ENCODE measurements at regions of chr18 and their contacts with region 1.

Region 1: DNA sequence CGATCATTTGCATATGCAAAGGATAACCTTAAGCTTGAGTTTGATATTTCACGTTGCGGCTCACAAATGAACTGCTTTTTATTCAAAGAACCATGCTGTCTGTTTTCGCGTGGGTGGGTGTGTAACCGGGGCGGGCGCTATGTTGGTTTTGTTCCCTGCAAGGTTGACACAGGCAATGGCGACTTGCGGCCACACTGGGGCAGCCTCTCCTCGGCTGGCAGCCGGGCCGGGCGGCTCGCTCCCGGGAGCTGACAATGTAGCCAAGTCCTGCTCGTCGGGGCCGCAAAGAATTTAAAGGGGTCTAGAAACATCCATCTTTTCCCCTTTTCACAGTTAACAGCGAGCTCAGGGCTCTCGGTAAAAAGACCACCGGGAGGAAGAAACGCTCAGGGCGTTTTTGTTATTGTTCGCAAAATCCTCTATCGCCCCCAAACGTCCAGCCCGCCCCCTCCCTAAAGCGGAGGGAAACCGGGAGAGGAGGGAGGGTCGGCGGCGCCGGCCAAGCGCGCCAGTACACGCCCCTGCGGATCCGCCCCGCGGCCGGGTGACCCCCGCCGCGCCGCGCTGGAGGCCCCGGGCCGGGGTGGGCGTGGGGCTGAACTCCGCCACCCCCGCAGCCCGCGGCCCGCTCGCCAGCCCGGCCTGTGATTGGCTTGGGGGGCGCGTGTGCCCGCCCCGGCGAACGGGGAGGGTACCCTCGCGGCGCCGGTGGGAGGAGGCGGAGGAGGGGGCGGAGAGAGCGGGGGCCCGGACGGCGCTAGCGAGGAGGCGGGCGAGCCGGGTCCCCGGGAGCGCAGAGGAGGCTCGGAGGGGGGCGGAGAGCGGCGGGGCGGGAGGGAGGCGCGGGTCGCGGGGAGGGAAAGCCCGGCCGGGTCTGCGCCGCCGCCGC is at the start of gene NEDD4L:
- DNase-seq: peak; percentile 93
- H3K4me3 Mint-ChIP-seq: peak within 1 kb of the TSS; percentile 99
- H3K27ac Mint-ChIP-seq: peak within 1 kb of the TSS; percentile 93
- H3K4me1 Mint-ChIP-seq: peaks cover 50% of the 10 kb centered on the region
- H3K27me3 Mint-ChIP-seq: no peaks in the 10 kb centered on the region
- CTCF ChIP-seq: peak; percentile 79
- total RNA-seq, gene NEDD4L: 213 TPM in 2 replicates

Region 2: DNA sequence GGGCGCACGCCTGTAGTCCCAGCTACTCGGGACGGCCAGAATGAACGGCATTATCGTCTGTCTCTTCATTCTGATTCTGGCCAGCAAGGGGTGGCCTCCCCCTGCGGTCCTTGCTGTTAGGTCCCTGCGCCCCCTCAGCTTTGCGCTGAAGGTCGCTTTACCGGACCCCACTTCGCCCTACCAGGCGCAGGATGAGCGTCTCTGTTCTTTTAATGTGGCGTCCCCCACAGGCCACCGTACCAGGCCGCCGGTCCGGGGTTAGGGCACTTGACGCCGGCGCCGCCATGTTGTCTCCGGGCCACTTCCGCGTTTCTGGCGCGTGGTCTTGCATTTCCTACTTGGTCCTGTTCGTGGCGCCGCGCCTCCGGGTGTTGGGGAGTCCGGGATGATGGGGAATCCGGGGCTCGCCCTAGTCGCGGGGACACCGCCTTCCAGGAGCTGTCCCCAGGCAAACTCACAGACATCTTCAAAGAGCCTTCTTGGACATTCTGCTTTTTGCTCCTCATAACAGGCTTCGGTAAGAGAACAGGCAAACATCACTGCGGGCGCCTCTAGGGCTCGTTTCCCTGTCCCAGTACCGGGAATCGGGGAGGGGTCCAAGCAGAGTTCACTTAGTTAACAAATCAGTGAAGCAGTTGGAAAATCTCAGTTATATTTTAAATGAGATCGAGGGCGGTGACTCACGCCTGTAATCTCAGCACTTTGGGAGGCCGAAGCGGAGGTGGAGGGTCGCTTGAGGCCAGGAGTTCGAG is 413.6 kb before region 1 on chr18:
- CTCF ChIA-PET with region 1: interaction called, 3 read pairs
- intact Hi-C with region 1: loop called (anchors 10 kb)
- DNase-seq: peak; percentile 95
- H3K4me3 Mint-ChIP-seq: peak overlapping the region; percentile 80
- H3K27ac Mint-ChIP-seq: peak overlapping the region; percentile 73
- H3K4me1 Mint-ChIP-seq: peaks cover 38% of the 10 kb centered on the region
- H3K27me3 Mint-ChIP-seq: no peaks in the 10 kb centered on the region
- CTCF ChIP-seq: peak; percentile 79

Region 3: DNA sequence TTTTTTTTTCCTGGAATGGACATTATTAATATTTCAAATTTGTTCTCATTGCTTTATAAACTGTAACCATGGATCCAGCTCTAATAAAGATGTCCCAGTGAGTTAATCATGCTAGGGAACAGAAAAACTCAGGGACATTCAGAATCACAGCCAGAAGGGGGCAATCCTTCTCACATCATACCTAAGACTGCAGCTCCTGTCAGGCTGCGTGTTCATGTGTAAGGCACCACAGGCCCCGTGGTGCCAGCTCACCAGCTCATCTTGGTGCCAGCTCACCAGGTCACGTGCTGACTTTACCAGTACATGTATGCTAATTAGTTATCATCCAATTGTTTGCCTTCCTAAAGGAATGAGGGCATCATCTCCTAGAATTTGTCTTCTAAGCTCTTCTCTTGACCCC is 84.5 kb before region 1 on chr18:
- CTCF ChIA-PET with region 1: interaction called, 15 read pairs
- intact Hi-C with region 1: loop called (anchors 2 kb)
- DNase-seq: peak; percentile 72
- H3K4me3 Mint-ChIP-seq: no peak overlapping the region
- H3K27ac Mint-ChIP-seq: no peak overlapping the region
- H3K4me1 Mint-ChIP-seq: peaks cover 31% of the 10 kb centered on the region
- H3K27me3 Mint-ChIP-seq: no peaks in the 10 kb centered on the region
- CTCF ChIP-seq: no peak

Region 4: DNA sequence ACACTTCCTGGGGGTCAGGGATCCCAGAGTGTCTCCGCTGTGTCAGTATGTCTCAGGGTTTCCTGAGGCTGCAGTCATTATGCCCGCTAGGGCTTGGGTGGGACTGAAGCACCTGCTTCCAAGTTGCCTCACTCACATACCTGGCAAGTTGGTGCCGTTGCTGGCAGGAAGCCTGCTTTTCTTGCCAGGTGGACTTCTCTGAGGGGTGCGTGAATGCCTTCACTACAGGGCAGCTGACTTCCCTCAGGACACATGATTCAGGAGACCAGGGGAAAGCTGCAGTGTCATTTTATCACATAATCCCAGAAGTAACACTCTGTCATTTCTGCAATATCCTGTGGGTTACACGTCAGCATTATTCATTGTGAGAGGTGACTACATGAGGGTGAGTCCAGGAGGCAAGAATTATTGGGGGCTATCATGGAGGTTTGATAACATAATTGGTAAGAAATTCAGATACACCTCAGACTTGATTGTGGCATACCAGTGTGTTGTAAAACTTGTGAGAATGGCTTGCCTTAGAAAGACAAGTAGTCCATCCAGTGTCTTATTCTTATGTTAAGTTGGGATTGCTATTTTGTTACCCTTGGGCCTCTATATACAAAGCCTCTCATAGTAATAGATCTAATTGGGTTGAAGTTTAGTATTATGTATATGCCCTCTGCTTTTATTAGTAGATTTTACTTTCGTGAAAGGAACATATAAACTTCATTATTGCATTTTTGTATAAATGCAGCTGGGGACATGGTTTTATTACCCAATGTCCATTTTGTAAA is 44.4 kb after region 1 on chr18:
- CTCF ChIA-PET with region 1: interaction called, 4 read pairs
- intact Hi-C with region 1: loop called (anchors 5 kb)
- DNase-seq: peak; percentile 79
- H3K4me3 Mint-ChIP-seq: peak overlapping the region; percentile 54
- H3K27ac Mint-ChIP-seq: peak overlapping the region; percentile 56
- H3K4me1 Mint-ChIP-seq: peaks cover 72% of the 10 kb centered on the region
- H3K27me3 Mint-ChIP-seq: no peaks in the 10 kb centered on the region
- CTCF ChIP-seq: no peak

Region 5: DNA sequence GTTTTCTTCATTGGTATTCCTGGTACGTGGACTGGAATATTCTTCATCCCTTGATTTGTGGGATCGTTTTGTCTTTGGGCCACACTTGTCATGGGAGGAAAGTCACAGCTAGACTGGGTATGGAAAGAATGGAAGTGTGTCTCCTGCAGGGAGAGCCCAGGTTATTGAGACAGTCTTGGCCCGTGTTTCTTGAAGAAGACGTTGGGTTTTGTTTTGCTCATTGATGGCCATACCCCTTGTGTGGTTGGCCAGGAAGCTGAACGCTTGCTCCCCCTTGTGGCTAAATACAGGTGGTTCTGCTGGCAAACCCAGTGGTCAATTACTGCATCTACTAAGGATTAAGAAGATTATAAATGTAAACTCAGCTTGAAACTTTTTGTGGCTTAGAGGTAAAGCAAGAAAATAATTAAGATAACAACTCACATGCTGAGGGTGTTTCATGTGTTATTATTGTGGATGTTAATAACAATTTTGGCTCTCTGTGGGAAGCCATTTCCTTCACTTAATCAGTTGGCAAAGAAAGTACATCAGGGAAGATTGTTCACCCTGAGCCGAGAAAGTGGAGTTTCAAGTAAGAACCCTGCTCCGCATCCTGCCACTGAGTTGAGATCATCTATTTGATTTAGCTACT is 92.1 kb after region 1 on chr18:
- CTCF ChIA-PET with region 1: interaction called, 3 read pairs
- intact Hi-C with region 1: loop called (anchors 5 kb)
- DNase-seq: peak; percentile 80
- H3K4me3 Mint-ChIP-seq: peak overlapping the region; percentile 43
- H3K27ac Mint-ChIP-seq: peak overlapping the region; percentile 69
- H3K4me1 Mint-ChIP-seq: peaks cover 65% of the 10 kb centered on the region
- H3K27me3 Mint-ChIP-seq: no peaks in the 10 kb centered on the region
- CTCF ChIP-seq: peak; percentile 87

Region 6: DNA sequence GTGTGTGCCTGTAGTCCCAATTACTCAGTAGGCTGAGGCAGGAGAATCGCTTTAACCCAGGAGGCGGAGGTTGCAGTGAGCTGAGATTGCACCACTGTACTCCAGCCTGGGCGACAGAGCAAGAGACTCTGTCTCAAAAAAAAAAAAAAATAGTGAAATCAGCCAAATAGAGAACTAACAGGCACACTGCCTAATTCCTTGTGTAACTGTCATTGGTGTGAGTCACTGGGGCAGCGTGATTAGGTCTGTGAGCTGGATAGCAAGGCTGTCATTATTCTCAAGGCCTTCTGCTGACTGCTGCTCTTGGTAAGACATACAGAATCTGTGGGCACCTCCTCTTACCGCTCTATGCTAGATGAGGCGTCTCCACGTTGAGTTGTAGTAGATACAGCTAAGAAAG is 270.5 kb after region 1 on chr18:
- CTCF ChIA-PET with region 1: no interaction called
- intact Hi-C with region 1: loop called (anchors 10 kb)
- DNase-seq: peak; percentile 49
- H3K4me3 Mint-ChIP-seq: peak overlapping the region; percentile 59
- H3K27ac Mint-ChIP-seq: peak overlapping the region; percentile 58
- H3K4me1 Mint-ChIP-seq: peaks cover 78% of the 10 kb centered on the region
- H3K27me3 Mint-ChIP-seq: no peaks in the 10 kb centered on the region
- CTCF ChIP-seq: no peak